ENCODE measurements at regions of chr14 and their contacts with region 1.

Region 1: GRCh38 chr14:73606271-73606670 is 6.0 kb upstream of the ACOT6 start:
- DNase-seq: no peak

Region 2: DNA sequence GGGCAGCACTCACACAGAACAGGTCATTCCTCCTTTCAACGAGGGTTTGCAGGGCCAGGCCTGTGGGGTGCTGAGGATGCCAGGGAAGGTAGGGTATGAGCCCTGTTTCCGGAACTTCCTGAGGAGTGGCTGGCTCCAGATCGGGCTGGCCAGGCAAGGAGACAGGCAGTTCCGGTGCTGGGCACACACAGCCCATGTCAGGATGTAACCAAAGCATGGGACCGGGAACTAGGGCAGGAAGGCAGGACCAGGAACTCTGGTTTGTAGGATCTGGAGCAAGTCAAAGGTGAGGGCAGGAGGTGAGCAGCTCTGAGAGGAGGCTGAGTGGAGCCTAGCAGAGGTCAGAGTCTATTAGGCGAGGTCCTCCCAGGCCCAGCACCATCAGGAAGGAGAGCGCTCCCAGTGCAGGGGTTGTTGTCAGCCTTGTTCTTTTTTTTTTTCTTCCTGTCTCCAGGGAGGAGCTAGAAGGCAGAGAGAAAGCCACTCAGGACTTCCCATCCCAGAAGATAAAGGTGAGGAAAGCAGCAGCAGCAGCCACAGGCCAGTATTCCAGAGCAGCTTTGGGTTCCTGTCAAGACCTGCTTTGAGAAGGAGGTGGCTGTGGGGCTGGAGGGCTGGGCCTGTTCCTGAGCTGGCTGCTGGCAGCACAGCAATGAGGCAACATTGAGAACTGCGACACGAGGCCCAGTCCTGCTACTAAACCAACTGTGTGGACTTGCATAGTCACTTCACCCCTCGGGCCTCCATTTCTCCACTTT is 196.3 kb after region 1 on chr14:
- CTCF ChIA-PET with region 1: interaction called, 11 read pairs
- POLR2A ChIA-PET with region 1: no interaction called
- DNase-seq: no peak

Measured in HEK293T (cell line).